ENCODE measurements at regions of chr11 and their contacts with region 1.

Region 1: GRCh38 chr11:84019571-84020194 is 733.5 kb upstream of the CCDC90B start:
- DNase-seq: no peak
- H3K4me3 ChIP-seq: peak overlapping the region in 1 of 59 donors; percentile 36
- H3K27ac ChIP-seq: peak overlapping the region in 57 of 59 donors; percentile 22 to 96 (median 90)
- H3K27me3 ChIP-seq: no peaks in the 10 kb centered on the region
- CTCF ChIP-seq: no peak

Region 2: GRCh38 chr11:83971063-83971462 is 48.6 kb before region 1 on chr11:
- intact Hi-C with region 1: loop called in 1 of 2 experiments (anchors 10 kb)
- DNase-seq: peak in 6 of 10 donors; percentile 6 to 43 (median 34)
- H3K4me3 ChIP-seq: peak overlapping the region in 7 of 59 donors; percentile 0 to 29 (median 7)
- H3K27ac ChIP-seq: peak overlapping the region in 57 of 59 donors; percentile 32 to 91 (median 83)
- H3K27me3 ChIP-seq: no peaks in the 10 kb centered on the region
- CTCF ChIP-seq: peak in 11 of 56 donors; percentile 9 to 35 (median 15)

Region 3: GRCh38 chr11:84136926-84137325 is 117.2 kb after region 1 on chr11:
- intact Hi-C with region 1: loop called (anchors 5 to 10 kb)
- DNase-seq: no peak
- H3K4me3 ChIP-seq: peak overlapping the region in 1 of 59 donors; percentile 1
- H3K27ac ChIP-seq: peak overlapping the region in 55 of 59 donors; percentile 3 to 96 (median 89)
- H3K27me3 ChIP-seq: no peaks in the 10 kb centered on the region
- CTCF ChIP-seq: no peak

Region 4: GRCh38 chr11:84333221-84333620 is 313.5 kb after region 1 on chr11:
- intact Hi-C with region 1: no loop called
- DNase-seq: no peak
- H3K4me3 ChIP-seq: peak overlapping the region in 52 of 59 donors; percentile 0 to 61 (median 34)
- H3K27ac ChIP-seq: peak overlapping the region in 23 of 59 donors; percentile 2 to 61 (median 35)
- H3K27me3 ChIP-seq: no peaks in the 10 kb centered on the region
- CTCF ChIP-seq: no peak

Measured in dorsolateral prefrontal cortex (tissue), 120 donors.